ENCODE measurements at regions of chr1 and their contacts with region 1.

Region 1: GRCh38 chr1:172727956-172728603 is 69.2 kb downstream of the FASLG start:
- DNase-seq: peak; percentile 68
- ATAC-seq: peak; percentile 88
- H3K4me3 Mint-ChIP-seq: no peak overlapping the region
- H3K27ac Mint-ChIP-seq: peak overlapping the region; percentile 1
- H3K4me1 Mint-ChIP-seq: peaks cover 38% of the 10 kb centered on the region
- H3K27me3 Mint-ChIP-seq: peaks cover 16% of the 10 kb centered on the region

Region 2: DNA sequence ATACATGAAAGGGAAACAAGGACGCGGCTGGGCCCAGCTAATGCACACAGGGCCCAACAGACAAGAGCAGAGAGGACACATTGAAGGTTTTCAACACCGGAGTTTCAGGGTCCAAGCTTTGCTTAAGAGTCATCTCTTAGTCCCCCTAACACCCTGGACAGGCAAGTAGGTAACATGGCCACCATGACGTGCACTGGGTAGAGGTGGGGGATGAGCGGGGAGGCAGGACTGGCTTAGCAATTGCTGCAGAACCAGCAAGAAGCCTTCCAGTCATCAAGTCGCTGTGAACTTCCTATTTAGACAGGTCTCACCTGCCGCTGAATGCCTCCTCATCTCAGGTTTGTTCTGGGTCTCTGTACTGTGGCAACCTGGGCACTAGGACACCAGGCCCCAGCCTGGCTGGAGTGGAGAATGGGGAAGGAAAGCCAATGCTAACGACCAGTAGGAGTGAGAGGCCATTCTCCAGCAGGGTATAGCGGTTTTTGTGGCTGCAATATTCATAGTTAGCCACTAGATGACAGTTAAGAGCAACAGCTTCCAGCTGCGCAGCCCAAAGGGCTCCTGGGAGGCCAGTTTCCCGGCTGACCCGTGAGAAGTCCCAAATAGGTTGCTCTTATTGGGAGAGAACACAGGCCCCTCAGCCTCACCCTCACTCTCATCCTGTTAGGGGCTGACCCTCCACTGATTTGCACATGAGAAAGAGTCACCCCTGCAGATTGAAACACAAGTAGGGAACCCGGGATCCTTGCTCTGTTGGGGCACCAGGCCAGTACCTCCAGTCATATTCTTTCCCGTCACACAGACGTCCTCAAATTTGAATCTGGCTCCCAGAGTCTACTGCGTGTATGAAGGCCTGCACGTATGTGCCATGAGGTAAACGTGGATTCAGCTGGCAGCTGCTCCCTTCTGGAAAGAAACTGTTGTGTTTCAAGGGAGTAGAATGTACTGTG is 278.2 kb before region 1 on chr1:
- CTCF ChIA-PET with region 1: interaction called, 27 read pairs
- POLR2A ChIA-PET with region 1: no interaction called
- DNase-seq: peak; percentile 60
- ATAC-seq: peak; percentile 92
- H3K4me3 Mint-ChIP-seq: no peak overlapping the region
- H3K27ac Mint-ChIP-seq: no peak overlapping the region
- H3K4me1 Mint-ChIP-seq: peaks cover 25% of the 10 kb centered on the region
- H3K27me3 Mint-ChIP-seq: no peaks in the 10 kb centered on the region

Region 3: GRCh38 chr1:172532700-172533509 is 195.2 kb before region 1 on chr1 and contains the start of gene SUCO:
- CTCF ChIA-PET with region 1: interaction called, 4 read pairs
- POLR2A ChIA-PET with region 1: interaction called, 10 read pairs
- DNase-seq: peak; percentile 100
- ATAC-seq: peak; percentile 89
- H3K4me3 Mint-ChIP-seq: peak within 1 kb of the TSS; percentile 89
- H3K27ac Mint-ChIP-seq: peak within 1 kb of the TSS; percentile 100
- H3K4me1 Mint-ChIP-seq: peaks cover 37% of the 10 kb centered on the region
- H3K27me3 Mint-ChIP-seq: peaks cover 16% of the 10 kb centered on the region
- total RNA-seq, gene SUCO: 38.4 to 42.6 TPM

Region 4: GRCh38 chr1:172662464-172663109 is 65.5 kb before region 1 on chr1:
- CTCF ChIA-PET with region 1: interaction called, 81 read pairs
- POLR2A ChIA-PET with region 1: interaction called, 3 read pairs
- DNase-seq: peak; percentile 93
- ATAC-seq: peak; percentile 80
- H3K4me3 Mint-ChIP-seq: peak overlapping the region; percentile 81
- H3K27ac Mint-ChIP-seq: peak overlapping the region; percentile 83
- H3K4me1 Mint-ChIP-seq: peaks cover 81% of the 10 kb centered on the region
- H3K27me3 Mint-ChIP-seq: no peaks in the 10 kb centered on the region

Region 5: GRCh38 chr1:172713466-172713865 is 14.6 kb before region 1 on chr1:
- CTCF ChIA-PET with region 1: interaction called, 12 read pairs
- POLR2A ChIA-PET with region 1: no interaction called
- DNase-seq: no peak
- ATAC-seq: no peak
- H3K4me3 Mint-ChIP-seq: no peak overlapping the region
- H3K27ac Mint-ChIP-seq: no peak overlapping the region
- H3K4me1 Mint-ChIP-seq: peaks cover 51% of the 10 kb centered on the region
- H3K27me3 Mint-ChIP-seq: peaks cover 2% of the 10 kb centered on the region

Region 6: DNA sequence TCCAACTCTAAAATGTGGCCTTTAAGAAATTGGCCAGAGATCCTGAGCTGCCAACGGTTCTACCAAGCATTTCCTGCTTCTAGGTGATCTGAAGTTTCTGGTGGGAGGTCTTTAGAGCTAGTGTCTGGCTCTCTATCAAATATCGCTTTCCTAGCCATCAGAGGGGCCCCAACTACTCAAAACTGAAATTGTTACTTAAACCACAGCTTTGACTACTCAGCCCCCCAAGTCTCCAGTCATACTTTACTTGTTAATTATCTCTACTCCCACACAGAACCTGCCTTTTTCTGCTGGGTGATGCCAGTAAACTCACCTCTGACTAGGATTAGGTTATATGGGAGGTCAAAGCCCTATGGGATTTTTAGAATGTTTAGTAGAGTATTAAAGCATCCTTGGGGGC is 25.9 kb after region 1 on chr1:
- CTCF ChIA-PET with region 1: no interaction called
- POLR2A ChIA-PET with region 1: no interaction called
- DNase-seq: no peak
- ATAC-seq: peak; percentile 27
- H3K4me3 Mint-ChIP-seq: no peak overlapping the region
- H3K27ac Mint-ChIP-seq: no peak overlapping the region
- H3K4me1 Mint-ChIP-seq: peaks cover 22% of the 10 kb centered on the region
- H3K27me3 Mint-ChIP-seq: no peaks in the 10 kb centered on the region

Region 7: DNA sequence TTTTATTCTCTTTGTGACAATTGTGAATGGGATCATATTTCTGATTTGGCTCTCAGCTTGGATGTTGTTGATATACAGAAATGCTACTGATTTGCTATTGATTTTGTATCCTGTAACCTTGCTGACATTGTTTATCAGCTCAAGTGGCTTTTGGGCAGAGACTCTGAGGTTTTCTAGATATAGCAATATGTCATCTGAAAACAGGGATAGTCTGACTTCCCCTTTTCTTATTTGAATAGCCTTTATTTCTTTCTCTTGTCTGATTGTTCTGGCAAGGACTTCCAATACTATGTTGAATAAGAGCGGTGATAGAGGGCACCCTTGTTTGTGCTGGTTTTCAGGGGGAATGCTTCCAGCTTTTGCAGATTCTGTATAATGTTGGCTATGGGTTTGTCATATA is 81.7 kb after region 1 on chr1:
- CTCF ChIA-PET with region 1: no interaction called
- POLR2A ChIA-PET with region 1: no interaction called
- DNase-seq: no peak
- ATAC-seq: no peak
- H3K4me3 Mint-ChIP-seq: no peak overlapping the region
- H3K27ac Mint-ChIP-seq: no peak overlapping the region
- H3K4me1 Mint-ChIP-seq: peaks cover 17% of the 10 kb centered on the region
- H3K27me3 Mint-ChIP-seq: no peaks in the 10 kb centered on the region

Measured in activated CD8-positive, alpha-beta T cell treated with anti-CD3 and anti-CD28 coated beads, Interleukin-2, amount 10 ng/mL, durations not matched to agents 7 days and 5 days (primary cell).